Psoas muscle (tissue), 8 donors: ENCODE measurements at regions of chr11 and their contacts with region 1.

Region 1: DNA sequence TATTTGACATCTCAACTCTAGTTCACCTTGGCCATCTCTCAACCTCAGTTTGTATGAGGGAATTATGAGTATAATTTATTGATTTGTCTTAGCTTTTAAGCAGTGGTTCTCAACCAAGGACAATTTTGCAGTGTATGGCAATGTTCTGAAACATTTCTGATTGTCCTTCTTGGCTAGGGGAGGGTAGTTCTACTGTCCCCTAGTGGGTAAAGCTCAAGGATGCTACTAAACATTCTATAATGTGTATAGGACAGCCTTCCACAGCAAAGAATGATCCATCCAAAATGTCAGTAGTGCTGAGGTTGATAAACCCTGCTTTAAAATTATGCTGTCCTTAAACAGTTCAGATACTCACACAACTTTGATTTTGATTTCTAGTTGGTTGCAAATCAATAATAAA is 78.1 kb upstream of the ALKBH3 start:
- DNase-seq: no peak
- ATAC-seq: no peak
- H3K4me3 ChIP-seq: no peak overlapping the region
- H3K27ac ChIP-seq: no peak overlapping the region
- H3K4me1 ChIP-seq: no peaks in the 10 kb centered on the region
- H3K27me3 ChIP-seq: no peaks in the 10 kb centered on the region
- CTCF ChIP-seq: no peak

Region 2: DNA sequence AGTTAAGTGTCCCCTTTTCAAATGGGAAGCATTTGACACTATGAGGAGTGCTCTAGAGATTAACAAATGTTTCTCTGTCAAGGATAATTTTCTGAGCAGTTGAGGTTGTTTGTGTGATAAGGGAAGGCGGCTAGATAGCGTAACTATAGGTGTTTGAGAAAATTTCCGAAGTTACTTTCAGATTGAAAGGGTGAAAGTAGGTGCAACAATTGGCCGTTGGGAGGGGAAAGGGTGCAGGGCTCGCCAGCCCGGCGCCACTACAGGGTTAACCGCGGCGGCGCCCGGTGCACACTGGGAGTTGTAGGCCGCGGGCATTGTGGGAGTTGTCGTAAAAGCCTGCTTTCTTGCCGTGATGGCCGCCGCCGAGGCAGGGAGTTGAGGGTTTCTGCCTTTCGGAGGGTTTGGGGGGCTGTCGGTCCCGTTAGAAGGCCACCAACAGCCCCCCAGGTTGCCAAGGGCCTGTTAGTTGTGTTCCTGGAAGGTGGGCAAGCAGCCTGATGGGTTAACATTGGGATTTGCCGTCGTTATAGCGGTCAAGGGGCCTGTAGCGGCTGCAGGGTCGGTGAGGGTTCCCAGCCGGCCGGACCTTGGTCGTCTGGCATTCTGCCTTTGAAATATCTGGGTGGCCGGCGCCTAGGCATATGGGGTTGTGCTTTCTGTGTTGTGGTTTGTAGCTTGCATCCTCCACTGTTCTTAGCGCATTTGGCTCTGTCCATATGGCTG is 158.4 kb before region 1 on chr11:
- intact Hi-C with region 1: loop called in 1 of 2 experiments (anchors 10 kb)
- DNase-seq: peak; percentile 89 to 92
- ATAC-seq: peak; percentile 99 to 100 (median 100)
- H3K4me3 ChIP-seq: peak overlapping the region; percentile 80
- H3K27ac ChIP-seq: peak overlapping the region; percentile 80
- H3K4me1 ChIP-seq: peaks cover 22% of the 10 kb centered on the region
- H3K27me3 ChIP-seq: peaks cover 1 to 12% (median 2%) of the 10 kb centered on the region in 3 donors
- CTCF ChIP-seq: no peak

Region 3: GRCh38 chr11:43788421-43788820 is 14.1 kb before region 1 on chr11:
- intact Hi-C with region 1: loop called in 1 of 2 experiments (anchors 1 kb)
- DNase-seq: no peak
- ATAC-seq: no peak
- H3K4me3 ChIP-seq: no peak overlapping the region
- H3K27ac ChIP-seq: no peak overlapping the region
- H3K4me1 ChIP-seq: peaks cover 9% of the 10 kb centered on the region
- H3K27me3 ChIP-seq: no peaks in the 10 kb centered on the region
- CTCF ChIP-seq: no peak